Dendritic cell treated with granulocyte-macrophage colony-stimulating factor and Interleukin-4, amounts not matched to agents 40 ng/mL and 50 ng/mL, for 4 days (primary cell): ENCODE measurements at regions of chr17 and their contacts with region 1.

Region 1: GRCh38 chr17:28644985-28645939 is at the start of gene BLTP2:
- H3K4me3 Mint-ChIP-seq: peak within 1 kb of the TSS; percentile 97
- H3K27ac Mint-ChIP-seq: peak within 1 kb of the TSS; percentile 93
- H3K4me1 Mint-ChIP-seq: peaks cover 44% of the 10 kb centered on the region
- H3K27me3 Mint-ChIP-seq: no peaks in the 10 kb centered on the region

Region 2: DNA sequence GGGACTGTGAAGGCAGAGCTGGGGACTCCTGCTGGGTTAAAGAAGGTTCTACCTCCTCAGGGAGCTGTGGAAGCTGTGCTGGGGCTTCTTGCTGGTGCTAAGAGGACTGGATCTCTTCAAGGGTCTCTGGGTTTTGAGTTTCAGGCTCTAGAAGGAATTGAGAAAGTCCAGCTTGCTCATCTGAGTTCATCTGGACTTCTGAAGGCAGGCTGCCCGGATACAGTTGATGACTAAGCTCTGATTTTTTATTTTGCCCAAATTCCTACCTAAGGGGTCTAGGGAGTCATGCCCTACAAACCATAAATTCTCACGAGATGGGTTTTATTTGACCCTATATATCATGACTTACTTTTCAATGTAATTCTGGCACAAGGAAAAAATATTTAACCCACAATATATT is 373.1 kb before region 1 on chr17:
- intact Hi-C with region 1: no loop called
- H3K4me3 Mint-ChIP-seq: no peak overlapping the region
- H3K27ac Mint-ChIP-seq: no peak overlapping the region
- H3K4me1 Mint-ChIP-seq: no peaks in the 10 kb centered on the region
- H3K27me3 Mint-ChIP-seq: peaks cover 77% of the 10 kb centered on the region

Region 3: GRCh38 chr17:28598799-28599310 is 46.4 kb before region 1 on chr17 and contains the start of gene SPAG5:
- intact Hi-C with region 1: loop called (anchors 5 kb)
- H3K4me3 Mint-ChIP-seq: peak within 1 kb of the TSS; percentile 88
- H3K27ac Mint-ChIP-seq: peak within 1 kb of the TSS; percentile 87
- H3K4me1 Mint-ChIP-seq: peaks cover 30% of the 10 kb centered on the region
- H3K27me3 Mint-ChIP-seq: no peaks in the 10 kb centered on the region

Region 4: DNA sequence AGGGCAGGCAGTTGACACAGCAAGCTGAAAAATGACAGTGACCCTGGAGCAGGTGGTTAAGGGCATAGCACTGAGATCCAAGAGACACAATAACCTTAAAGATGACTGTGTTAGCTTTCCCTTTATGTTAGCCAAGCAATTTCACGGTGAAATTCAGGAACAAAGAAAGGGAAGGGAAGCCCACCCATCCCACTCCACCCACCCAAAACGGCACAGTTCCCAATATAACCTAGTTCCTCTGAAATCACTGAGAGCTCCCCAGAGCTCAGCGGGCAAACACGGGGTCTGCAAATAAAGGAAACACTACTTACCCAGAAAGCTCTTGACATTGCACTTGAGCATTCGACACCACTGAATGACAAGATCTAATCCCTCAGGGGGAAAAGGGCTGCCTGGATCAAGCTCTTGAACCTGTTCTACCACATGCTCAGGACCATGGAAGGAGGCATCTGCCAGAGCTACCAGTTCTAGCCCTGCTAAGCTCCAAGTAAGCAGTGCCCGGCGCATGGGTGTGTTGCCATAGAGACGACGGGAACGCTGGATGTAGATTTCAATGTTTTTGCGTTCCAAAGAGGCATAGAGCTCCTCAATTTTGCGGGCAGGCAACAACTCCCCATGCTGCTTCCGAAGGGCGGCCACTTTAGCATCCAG is 10.9 kb before region 1 on chr17:
- intact Hi-C with region 1: no loop called
- H3K4me3 Mint-ChIP-seq: peak overlapping the region; percentile 72
- H3K27ac Mint-ChIP-seq: peak overlapping the region; percentile 63
- H3K4me1 Mint-ChIP-seq: peaks cover 78% of the 10 kb centered on the region
- H3K27me3 Mint-ChIP-seq: no peaks in the 10 kb centered on the region

Region 5: DNA sequence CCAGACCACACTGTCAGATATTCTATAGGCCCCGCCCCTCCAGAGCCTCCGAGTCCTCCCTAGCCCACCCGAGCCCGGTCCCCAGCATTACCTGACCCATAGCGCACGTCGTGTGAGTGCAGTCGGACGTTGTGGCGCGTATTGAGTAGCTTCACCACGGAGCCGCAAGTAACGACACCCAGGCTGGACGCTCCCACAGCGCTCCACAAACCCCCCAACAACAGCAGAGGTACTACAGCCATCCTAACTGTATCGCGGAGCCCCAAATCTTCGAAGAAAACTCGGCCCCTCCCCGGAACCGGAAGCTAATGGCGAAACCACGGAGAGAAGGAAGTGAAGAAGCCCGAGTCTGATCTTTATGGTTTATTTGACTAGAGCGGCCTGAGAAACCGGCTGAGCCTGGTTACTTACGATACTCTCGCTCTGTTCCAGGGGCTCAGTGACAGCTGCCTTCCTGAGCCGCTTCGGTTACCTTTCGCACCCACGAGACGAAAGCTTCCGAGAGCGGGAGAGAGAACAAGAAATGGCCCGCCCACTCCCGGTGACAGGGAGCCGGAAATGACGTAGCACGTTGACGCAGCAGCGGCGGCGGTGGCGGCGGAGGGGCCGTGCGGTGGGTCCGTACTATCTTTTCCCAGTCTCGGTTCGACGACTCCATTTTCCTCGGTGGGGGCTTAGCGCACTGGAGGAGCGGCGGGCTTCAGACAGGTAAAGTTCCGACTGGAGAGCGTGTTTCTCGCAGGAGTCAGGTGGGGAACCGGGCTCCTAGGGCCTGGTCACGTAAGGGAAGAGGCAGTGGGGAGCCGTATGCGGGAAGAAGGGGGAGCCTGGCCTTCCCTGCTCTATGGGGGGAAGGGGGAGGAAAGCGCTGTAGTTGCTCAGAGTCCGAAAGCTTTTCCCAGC is 16.6 kb after region 1 on chr17 and contains the starts of genes SDF2 and SUPT6H:
- intact Hi-C with region 1: loop called (anchors 1 kb)
- H3K4me3 Mint-ChIP-seq: peak within 1 kb of the TSS; percentile 99
- H3K27ac Mint-ChIP-seq: peak within 1 kb of the TSS; percentile 98
- H3K4me1 Mint-ChIP-seq: peaks cover 57% of the 10 kb centered on the region
- H3K27me3 Mint-ChIP-seq: no peaks in the 10 kb centered on the region

Region 6: DNA sequence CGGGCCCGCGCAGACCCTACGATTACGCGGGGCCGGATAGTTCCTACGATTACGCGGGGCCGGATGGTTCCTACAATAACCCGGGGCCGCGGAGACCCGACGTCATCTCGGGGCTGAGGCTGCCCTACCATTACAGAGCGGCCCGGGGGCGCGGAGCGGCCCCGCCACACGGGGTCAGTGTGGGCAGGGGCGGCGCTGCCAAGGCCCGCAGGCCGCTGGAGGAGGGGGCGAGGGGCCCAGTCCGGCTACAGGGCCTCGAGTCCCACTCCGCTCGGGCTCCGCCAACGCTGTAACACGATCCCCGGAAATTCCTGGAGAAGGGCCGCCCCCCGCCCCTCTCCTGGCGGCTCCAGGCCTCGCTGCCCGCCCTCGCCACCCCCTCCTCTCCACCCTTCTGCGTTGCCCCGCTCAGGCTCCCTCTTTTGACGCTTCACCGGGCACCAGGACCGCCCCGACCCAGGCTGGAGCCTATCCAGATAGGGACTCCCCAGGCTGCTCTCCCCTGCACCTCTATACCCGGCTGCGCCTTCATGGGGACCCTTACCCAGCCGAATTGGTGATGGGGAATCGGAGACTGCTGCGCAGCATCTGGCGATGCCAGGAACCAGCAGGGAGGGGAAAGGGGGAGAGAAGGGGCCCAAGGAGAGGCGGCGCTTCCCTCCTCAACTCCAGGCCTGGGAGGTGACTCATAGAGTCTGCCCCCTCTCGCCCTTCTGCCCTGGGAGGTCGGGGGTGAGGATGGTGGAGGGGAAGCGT is 72.5 kb after region 1 on chr17 and contains the start of gene RAB34:
- intact Hi-C with region 1: loop called (anchors 5 kb)
- H3K4me3 Mint-ChIP-seq: peak within 1 kb of the TSS; percentile 84
- H3K27ac Mint-ChIP-seq: peak within 1 kb of the TSS; percentile 91
- H3K4me1 Mint-ChIP-seq: peaks cover 49% of the 10 kb centered on the region
- H3K27me3 Mint-ChIP-seq: peaks cover 2% of the 10 kb centered on the region

Region 7: DNA sequence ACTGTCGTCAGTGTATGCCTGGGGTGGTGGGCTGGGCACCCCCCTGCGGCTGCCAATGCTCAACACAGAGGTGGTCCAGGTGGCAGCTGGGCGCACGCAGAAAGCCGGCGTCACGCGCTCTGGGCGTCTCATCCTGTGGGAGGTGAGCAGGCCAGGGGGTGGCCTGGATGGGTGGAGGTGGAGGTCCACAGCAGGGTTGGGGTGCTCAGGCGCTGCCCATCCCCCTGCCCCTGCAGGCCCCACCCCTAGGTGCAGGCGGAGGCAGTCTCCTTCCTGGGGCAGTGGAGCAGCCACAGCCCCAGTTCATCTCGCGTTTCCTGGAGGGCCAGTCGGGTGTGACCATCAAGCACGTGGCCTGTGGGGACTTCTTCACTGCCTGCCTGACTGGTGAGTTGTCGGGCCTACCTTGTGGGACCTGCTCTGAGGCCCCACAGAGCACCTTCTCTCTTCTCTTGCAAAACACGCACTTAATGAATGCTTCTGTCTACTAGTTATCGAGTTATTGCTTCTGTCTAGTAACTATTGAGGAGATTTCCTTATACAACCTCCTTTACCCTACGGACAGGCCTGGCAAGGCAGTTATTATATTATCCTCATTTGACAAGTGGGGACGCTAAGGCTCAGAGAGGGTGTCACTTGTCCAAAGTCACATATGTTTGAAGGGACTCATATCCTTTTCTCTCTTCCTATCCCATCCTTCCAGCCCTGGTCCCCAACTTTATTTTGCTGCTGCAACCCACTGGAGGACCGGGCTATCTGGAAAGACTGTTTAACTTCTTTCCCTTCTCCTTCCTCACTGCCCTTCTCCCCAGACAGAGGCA is 92.8 kb after region 1 on chr17:
- intact Hi-C with region 1: no loop called
- H3K4me3 Mint-ChIP-seq: no peak overlapping the region
- H3K27ac Mint-ChIP-seq: no peak overlapping the region
- H3K4me1 Mint-ChIP-seq: peaks cover 25% of the 10 kb centered on the region
- H3K27me3 Mint-ChIP-seq: peaks cover 17% of the 10 kb centered on the region

Region 8: GRCh38 chr17:29048440-29049368 is 403.4 kb after region 1 on chr17:
- intact Hi-C with region 1: no loop called
- H3K4me3 Mint-ChIP-seq: no peak overlapping the region
- H3K27ac Mint-ChIP-seq: peak overlapping the region; percentile 33
- H3K4me1 Mint-ChIP-seq: peaks cover 53% of the 10 kb centered on the region
- H3K27me3 Mint-ChIP-seq: peaks cover 5% of the 10 kb centered on the region